ENCODE measurements at regions of chr11 and their contacts with region 1.

Region 1: GRCh38 chr11:100719809-100720221 is 32.7 kb downstream of the ARHGAP42 start:
- DNase-seq: no peak
- H3K4me3 ChIP-seq: peak overlapping the region; percentile 38
- H3K27ac ChIP-seq: peak overlapping the region; percentile 83
- H3K4me1 ChIP-seq: peaks cover 37% of the 10 kb centered on the region
- H3K27me3 ChIP-seq: no peaks in the 10 kb centered on the region
- CTCF ChIP-seq: no peak

Region 2: GRCh38 chr11:100445231-100445735 is 274.5 kb before region 1 on chr11:
- intact Hi-C with region 1: no loop called
- DNase-seq: no peak
- H3K4me3 ChIP-seq: no peak overlapping the region
- H3K27ac ChIP-seq: peak overlapping the region; percentile 81
- H3K4me1 ChIP-seq: peaks cover 8% of the 10 kb centered on the region
- H3K27me3 ChIP-seq: no peaks in the 10 kb centered on the region
- CTCF ChIP-seq: peak; percentile 55

Region 3: GRCh38 chr11:100789500-100789899 is 69.7 kb after region 1 on chr11:
- intact Hi-C with region 1: loop called (anchors 10 kb)
- DNase-seq: peak; percentile 23
- H3K4me3 ChIP-seq: no peak overlapping the region
- H3K27ac ChIP-seq: peak overlapping the region; percentile 13
- H3K4me1 ChIP-seq: peaks cover 57% of the 10 kb centered on the region
- H3K27me3 ChIP-seq: no peaks in the 10 kb centered on the region
- CTCF ChIP-seq: no peak